Left cardiac atrium (tissue), 4 donors: ENCODE measurements at regions of chr11 and their contacts with region 1.

Region 1: GRCh38 chr11:124415356-124415923 is 9.2 kb downstream of the OR8B4 start:
- DNase-seq: no peak
- ATAC-seq: no peak

Region 2: GRCh38 chr11:124359566-124359965 is 55.9 kb before region 1 on chr11:
- intact Hi-C with region 1: no loop called
- DNase-seq: no peak
- ATAC-seq: no peak

Region 3: DNA sequence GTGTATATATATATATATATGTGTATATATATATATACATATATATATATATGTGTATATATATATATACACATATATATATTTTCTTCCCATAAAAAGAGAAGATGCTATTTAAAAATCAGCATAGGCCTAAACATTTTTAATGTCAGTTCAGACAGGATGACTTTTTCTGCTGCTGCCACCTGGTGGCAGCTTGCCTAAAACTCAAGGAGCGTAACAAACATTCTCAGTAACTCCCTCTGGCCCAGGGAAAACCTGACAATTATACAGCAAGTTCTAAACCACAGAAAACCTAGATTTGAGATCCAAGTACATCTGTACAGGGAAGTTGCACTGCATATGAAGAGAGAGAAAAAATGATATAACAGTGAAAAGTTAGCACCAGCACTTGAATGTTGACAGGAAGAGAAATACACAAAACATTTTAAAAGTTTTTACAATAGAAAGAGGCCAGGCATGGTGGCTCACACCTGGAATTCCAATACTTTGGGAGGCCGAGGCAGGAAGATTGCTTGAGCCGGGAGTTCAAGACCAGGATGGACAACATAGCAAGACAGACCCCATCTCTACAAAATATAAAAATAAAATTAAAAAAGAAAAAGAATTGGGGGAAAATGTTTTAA is 170.9 kb after region 1 on chr11:
- intact Hi-C with region 1: loop called (anchors 1 to 5 kb)
- DNase-seq: peak; percentile 70
- ATAC-seq: peak in 1 of 2 donors; percentile 53